ENCODE measurements at regions of chrX and their contacts with region 1.

Region 1: DNA sequence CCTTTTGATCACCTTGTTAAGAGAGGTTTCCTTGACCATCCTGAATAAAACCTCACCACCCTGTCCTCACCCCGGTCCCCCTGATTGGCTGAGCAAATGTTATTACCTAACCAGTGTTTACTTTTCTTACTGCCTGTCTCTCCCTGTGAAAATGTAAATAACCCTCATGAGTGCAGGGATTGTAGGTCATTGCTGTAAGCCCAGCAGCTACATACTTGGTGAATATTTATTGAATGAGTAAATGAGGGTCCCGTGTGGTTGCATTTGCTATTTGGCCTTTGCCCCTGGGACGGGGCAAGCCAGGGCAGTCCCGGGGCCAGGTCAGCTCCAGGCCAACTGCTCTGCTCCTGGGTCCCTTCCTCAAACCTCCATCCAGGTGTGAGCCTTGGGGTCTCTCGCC is 55.5 kb upstream of the CLCN4 start:
- DNase-seq: no peak
- ATAC-seq: no peak
- H3K4me3 ChIP-seq: no peak overlapping the region
- H3K27ac ChIP-seq: no peak overlapping the region
- H3K4me1 ChIP-seq: no peaks in the 10 kb centered on the region
- H3K27me3 ChIP-seq: no peaks in the 10 kb centered on the region
- CTCF ChIP-seq: no peak

Region 2: GRCh38 chrX:9644335-9644734 is 456.9 kb before region 1 on chrX:
- CTCF ChIA-PET with region 1: no interaction called
- POLR2A ChIA-PET with region 1: no interaction called
- intact Hi-C with region 1: no loop called
- DNase-seq: no peak
- ATAC-seq: no peak
- H3K4me3 ChIP-seq: no peak overlapping the region
- H3K27ac ChIP-seq: no peak overlapping the region
- H3K4me1 ChIP-seq: no peaks in the 10 kb centered on the region
- H3K27me3 ChIP-seq: no peaks in the 10 kb centered on the region
- CTCF ChIP-seq: no peak

Region 3: DNA sequence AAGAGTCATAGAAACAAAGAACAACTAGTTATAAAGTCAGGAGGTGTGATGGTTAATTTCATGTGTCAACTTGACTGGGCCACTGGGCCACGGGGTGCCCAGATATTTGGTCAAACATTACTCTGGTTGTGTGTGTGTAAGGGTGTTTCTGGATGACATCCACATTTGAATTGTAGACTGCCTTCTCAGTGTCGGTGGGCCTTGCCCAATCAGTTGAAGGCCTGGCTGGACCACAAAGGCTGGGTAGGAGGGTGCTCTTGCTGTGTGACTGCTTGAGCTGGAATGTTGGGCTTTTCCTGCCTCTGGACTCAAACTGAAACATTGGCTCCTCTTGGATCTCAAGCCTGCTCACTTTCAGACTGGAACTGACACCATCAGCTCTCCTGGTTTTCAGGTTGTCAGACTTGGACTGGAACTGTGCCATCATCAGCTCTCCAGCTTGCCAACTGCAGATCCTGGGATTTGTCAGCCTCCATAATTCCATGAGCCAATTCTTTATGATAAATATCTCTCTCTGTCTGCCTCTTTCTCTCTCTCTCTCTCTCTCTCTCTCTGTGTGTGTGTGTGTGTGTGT is 92.7 kb before region 1 on chrX:
- CTCF ChIA-PET with region 1: no interaction called
- POLR2A ChIA-PET with region 1: interaction called, 17 read pairs
- intact Hi-C with region 1: no loop called
- DNase-seq: no peak
- ATAC-seq: no peak
- H3K4me3 ChIP-seq: no peak overlapping the region
- H3K27ac ChIP-seq: no peak overlapping the region
- H3K4me1 ChIP-seq: peaks cover 29% of the 10 kb centered on the region
- H3K27me3 ChIP-seq: no peaks in the 10 kb centered on the region
- CTCF ChIP-seq: no peak

Region 4: GRCh38 chrX:10062352-10062751 is 38.9 kb before region 1 on chrX:
- CTCF ChIA-PET with region 1: no interaction called
- POLR2A ChIA-PET with region 1: no interaction called
- intact Hi-C with region 1: no loop called
- DNase-seq: peak; percentile 77
- ATAC-seq: peak; percentile 71
- H3K4me3 ChIP-seq: peak overlapping the region; percentile 70
- H3K27ac ChIP-seq: peak overlapping the region; percentile 98
- H3K4me1 ChIP-seq: peaks cover 29% of the 10 kb centered on the region
- H3K27me3 ChIP-seq: no peaks in the 10 kb centered on the region
- CTCF ChIP-seq: no peak

Region 5: GRCh38 chrX:10199212-10199611 is 97.9 kb after region 1 on chrX:
- CTCF ChIA-PET with region 1: no interaction called
- POLR2A ChIA-PET with region 1: no interaction called
- intact Hi-C with region 1: no loop called
- DNase-seq: no peak
- ATAC-seq: no peak
- H3K4me3 ChIP-seq: no peak overlapping the region
- H3K27ac ChIP-seq: no peak overlapping the region
- H3K4me1 ChIP-seq: no peaks in the 10 kb centered on the region
- H3K27me3 ChIP-seq: no peaks in the 10 kb centered on the region
- CTCF ChIP-seq: no peak